ENCODE measurements at regions of chr2 and their contacts with region 1.

Region 1: GRCh38 chr2:9630749-9631483 is at the start of gene YWHAQ:
- DNase-seq: peak; percentile 99
- total RNA-seq, gene YWHAQ: 243 to 339 TPM

Region 2: GRCh38 chr2:9474361-9474967 is 156.5 kb before region 1 on chr2 and contains the start of gene IAH1:
- intact Hi-C with region 1: no loop called
- DNase-seq: peak; percentile 89
- total RNA-seq, gene IAH1: 36.7 to 45.2 TPM

Region 3: DNA sequence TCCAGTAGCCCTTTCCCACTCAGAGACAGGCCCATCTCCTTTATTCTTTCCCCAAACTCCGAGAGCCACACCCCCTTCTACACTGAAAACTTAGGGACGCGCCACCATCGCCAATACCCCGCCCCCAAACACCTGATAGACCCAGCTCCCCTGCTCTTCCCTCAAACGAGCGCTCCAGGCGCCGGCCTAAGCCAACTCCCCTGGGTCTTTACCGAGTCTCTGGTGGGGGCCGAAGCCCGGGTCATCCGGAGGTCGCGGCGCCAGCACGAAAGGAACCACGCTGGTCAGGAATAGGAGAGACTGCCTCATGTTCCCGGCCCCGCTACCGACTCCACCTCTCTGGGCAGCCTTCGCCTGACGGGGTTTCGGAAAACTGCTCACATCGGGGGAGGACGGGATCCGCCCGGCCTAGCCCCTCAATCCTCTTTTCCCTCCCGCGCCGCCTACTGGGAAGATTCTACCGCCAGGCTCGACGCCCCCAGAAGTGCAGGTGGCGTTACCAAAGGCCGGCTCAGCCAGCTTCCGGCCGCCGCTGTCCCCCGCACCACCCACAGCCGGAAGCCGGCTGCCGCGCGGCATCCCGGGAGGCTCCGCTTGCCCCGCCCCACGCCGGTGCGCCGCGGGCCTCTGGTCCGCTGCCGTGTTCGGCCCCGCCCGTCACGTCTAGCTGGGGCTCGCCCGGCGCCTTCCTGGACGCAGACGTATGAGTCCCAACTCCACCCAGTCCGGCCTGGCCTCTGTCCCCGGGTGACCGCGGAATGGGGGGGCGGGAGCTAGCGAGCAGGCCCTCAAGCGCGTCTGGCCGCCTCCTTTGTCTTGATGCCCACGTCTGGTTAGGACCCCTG is 75.4 kb before region 1 on chr2 and contains the start of gene ADAM17:
- intact Hi-C with region 1: loop called in 1 of 2 experiments (anchors 10 kb)
- DNase-seq: peak; percentile 100
- total RNA-seq, gene ADAM17: 24.8 to 34.9 TPM

Region 4: DNA sequence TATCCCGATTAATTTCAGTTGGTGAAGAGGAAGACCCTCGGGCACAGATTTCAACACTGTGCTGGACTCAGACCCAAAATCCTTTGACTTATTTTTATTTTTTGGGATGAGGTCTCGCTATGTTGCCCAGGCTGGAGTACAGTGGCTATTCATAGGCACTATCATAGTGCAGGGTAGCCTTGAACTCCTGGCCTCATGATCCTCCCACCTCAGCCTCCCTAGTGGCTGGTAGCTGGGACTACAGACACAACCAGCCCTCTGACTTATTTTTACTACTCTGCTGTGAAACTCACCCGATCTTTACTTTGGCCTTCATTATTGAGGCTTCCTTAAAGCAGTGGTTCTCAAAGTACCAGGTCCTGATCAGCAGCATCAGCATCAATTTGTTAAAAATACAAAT is 57.1 kb before region 1 on chr2:
- intact Hi-C with region 1: loop called in 1 of 2 experiments (anchors 10 kb)
- DNase-seq: no peak

Region 5: GRCh38 chr2:9665898-9666297 is 35.0 kb after region 1 on chr2:
- intact Hi-C with region 1: no loop called
- DNase-seq: no peak

Region 6: GRCh38 chr2:9693211-9693520 is 62.2 kb after region 1 on chr2:
- intact Hi-C with region 1: loop called in 1 of 2 experiments (anchors 10 kb)
- DNase-seq: peak; percentile 93

Region 7: DNA sequence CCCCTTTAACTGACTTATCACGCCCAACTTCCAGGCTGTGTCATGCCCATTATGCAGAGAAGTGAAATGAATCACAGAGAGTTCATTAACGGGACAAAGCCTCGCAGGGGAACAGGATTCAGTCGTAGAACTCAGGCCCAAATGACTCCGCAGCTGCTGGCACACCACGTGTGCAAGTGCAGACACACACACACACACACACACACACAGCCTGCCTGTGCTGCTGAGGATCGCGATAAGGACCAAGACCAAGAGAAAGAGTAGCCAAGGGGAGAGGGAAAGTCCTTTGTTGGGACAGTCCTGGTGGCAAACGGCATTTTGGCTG is 122.3 kb after region 1 on chr2:
- intact Hi-C with region 1: loop called in 1 of 2 experiments (anchors 10 kb)
- DNase-seq: peak; percentile 91